ENCODE measurements at regions of chr3 and their contacts with region 1.

Region 1: DNA sequence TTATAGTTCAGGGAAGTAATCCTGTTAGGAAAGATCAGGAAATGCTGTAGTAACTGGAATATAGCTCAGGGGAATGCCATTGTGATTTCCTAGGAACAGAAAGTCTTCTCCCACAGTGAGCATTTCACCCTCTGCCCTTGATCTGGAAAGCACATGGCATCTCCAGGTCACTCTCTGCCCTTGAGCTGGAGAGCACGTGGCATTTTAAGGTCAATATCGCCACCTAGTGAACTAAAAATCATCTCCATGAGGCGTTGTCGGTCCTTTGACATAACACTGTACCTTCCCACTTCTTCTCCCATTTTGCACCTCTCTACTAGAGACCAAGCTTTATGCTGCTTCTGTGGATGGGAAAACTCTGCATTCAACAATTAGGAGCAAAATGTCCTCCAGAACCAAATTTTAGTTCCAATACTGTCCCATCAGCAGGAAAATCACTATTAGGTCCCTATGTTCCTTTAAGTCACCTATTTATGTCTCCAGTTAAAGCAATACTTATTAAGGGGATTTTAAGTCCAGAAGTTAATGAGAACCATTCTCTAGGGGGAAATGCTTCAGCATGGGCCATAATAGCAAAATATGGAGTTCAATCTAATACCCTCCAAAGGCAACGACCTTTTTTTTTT is 54.7 kb upstream of the GK5 start:
- DNase-seq: no peak
- ATAC-seq: peak; percentile 80
- H3K4me3 Mint-ChIP-seq: no peak overlapping the region
- H3K27ac Mint-ChIP-seq: no peak overlapping the region
- H3K4me1 Mint-ChIP-seq: no peaks in the 10 kb centered on the region
- H3K27me3 Mint-ChIP-seq: no peaks in the 10 kb centered on the region
- CTCF ChIP-seq: no peak

Region 2: GRCh38 chr3:141575879-141576743 is 704.0 kb before region 1 on chr3:
- CTCF ChIA-PET with region 1: interaction called, 3 read pairs
- POLR2A ChIA-PET with region 1: no interaction called
- intact Hi-C with region 1: loop called (anchors 1 kb)
- DNase-seq: no peak
- ATAC-seq: peak; percentile 47
- H3K4me3 Mint-ChIP-seq: no peak overlapping the region
- H3K27ac Mint-ChIP-seq: peak overlapping the region; percentile 19
- H3K4me1 Mint-ChIP-seq: peaks cover 5% of the 10 kb centered on the region
- H3K27me3 Mint-ChIP-seq: no peaks in the 10 kb centered on the region
- CTCF ChIP-seq: no peak

Region 3: GRCh38 chr3:142124243-142124642 is 155.8 kb before region 1 on chr3:
- CTCF ChIA-PET with region 1: interaction called, 18 read pairs
- POLR2A ChIA-PET with region 1: no interaction called
- intact Hi-C with region 1: loop called (anchors 1 kb)
- DNase-seq: no peak
- ATAC-seq: no peak
- H3K4me3 Mint-ChIP-seq: no peak overlapping the region
- H3K27ac Mint-ChIP-seq: no peak overlapping the region
- H3K4me1 Mint-ChIP-seq: no peaks in the 10 kb centered on the region
- H3K27me3 Mint-ChIP-seq: no peaks in the 10 kb centered on the region
- CTCF ChIP-seq: no peak

Region 4: GRCh38 chr3:142129516-142130171 is 150.4 kb before region 1 on chr3:
- CTCF ChIA-PET with region 1: interaction called, 18 read pairs
- POLR2A ChIA-PET with region 1: no interaction called
- intact Hi-C with region 1: loop called (anchors 1 kb)
- DNase-seq: no peak
- ATAC-seq: no peak
- H3K4me3 Mint-ChIP-seq: no peak overlapping the region
- H3K27ac Mint-ChIP-seq: no peak overlapping the region
- H3K4me1 Mint-ChIP-seq: peaks cover 2% of the 10 kb centered on the region
- H3K27me3 Mint-ChIP-seq: no peaks in the 10 kb centered on the region
- CTCF ChIP-seq: no peak

Region 5: GRCh38 chr3:142180761-142181362 is 99.2 kb before region 1 on chr3:
- CTCF ChIA-PET with region 1: interaction called, 8 read pairs
- POLR2A ChIA-PET with region 1: no interaction called
- intact Hi-C with region 1: loop called (anchors 1 kb)
- DNase-seq: no peak
- ATAC-seq: no peak
- H3K4me3 Mint-ChIP-seq: no peak overlapping the region
- H3K27ac Mint-ChIP-seq: no peak overlapping the region
- H3K4me1 Mint-ChIP-seq: no peaks in the 10 kb centered on the region
- H3K27me3 Mint-ChIP-seq: no peaks in the 10 kb centered on the region
- CTCF ChIP-seq: no peak

Measured in activated B cell treated with CpG ODN at 0.5 μM for 24 hours (primary cell).